CD4-positive, alpha-beta memory T cell (primary cell): ENCODE measurements at regions of chr5 and their contacts with region 1.

Region 1: DNA sequence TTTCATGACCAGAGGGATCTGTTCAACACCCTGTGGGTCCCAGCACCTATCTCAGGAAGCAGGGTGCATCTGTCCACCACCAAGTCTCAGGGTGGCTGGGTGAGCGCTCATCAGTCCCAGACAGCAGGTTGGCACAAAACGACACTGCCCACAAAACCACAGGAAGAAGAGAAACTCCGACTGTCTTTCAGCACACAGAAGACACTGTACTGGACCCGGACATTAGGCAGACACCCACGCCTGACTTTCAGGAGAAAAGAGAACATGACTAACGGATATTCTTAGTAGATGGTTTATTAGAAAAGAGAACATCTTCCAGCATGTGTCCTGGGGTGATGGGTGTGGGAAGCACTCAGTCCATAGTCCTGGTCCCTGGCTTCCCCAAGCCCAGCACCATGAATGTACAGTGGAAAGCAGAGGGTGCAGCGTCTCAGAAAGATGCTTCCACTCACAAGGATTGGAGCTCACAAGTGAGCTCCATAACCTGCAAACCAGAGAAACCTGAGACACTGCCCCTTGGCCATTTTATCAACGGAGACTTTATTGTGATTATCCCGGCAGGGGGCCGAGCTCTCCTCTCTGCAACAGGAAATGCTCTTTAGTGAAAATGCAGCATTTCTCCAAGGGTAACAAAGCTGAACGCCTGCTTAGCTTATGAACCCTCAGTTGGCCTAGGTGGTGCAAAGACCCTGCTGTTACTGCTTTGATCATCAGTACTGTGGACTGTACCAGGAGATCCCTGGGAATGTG is 35.8 kb upstream of the LCP2 start:
- DNase-seq: peak; percentile 55 to 88 (median 61)
- H3K4me3 ChIP-seq: peak overlapping the region in 1 of 2 donors; percentile 39
- H3K4me3 Mint-ChIP-seq: peak overlapping the region in 6 of 8 donors; percentile 71 to 90 (median 84)
- H3K27ac ChIP-seq: peak overlapping the region; percentile 94
- H3K27ac Mint-ChIP-seq: no peak overlapping the region
- H3K4me1 ChIP-seq: peaks cover 99% of the 10 kb centered on the region
- H3K4me1 Mint-ChIP-seq: peaks cover 0 to 59% (median 30%) of the 10 kb centered on the region in 4 donors
- H3K27me3 ChIP-seq: no peaks in the 10 kb centered on the region
- H3K27me3 Mint-ChIP-seq: peaks cover 0 to 2% of the 10 kb centered on the region in 2 donors

Region 2: GRCh38 chr5:170190436-170191134 is 142.8 kb before region 1 on chr5:
- CTCF ChIA-PET with region 1: no interaction called
- POLR2A ChIA-PET with region 1: no interaction called
- intact Hi-C with region 1: no loop called
- DNase-seq: no peak
- H3K4me3 ChIP-seq: no peak overlapping the region
- H3K4me3 Mint-ChIP-seq: no peak overlapping the region
- H3K27ac ChIP-seq: no peak overlapping the region
- H3K27ac Mint-ChIP-seq: no peak overlapping the region
- H3K4me1 ChIP-seq: no peaks in the 10 kb centered on the region
- H3K4me1 Mint-ChIP-seq: no peaks in the 10 kb centered on the region
- H3K27me3 ChIP-seq: no peaks in the 10 kb centered on the region
- H3K27me3 Mint-ChIP-seq: peaks cover 4 to 5% of the 10 kb centered on the region in 2 donors

Region 3: GRCh38 chr5:170253844-170254455 is 79.4 kb before region 1 on chr5:
- CTCF ChIA-PET with region 1: interaction called, 61 read pairs
- POLR2A ChIA-PET with region 1: interaction called, 7 read pairs
- intact Hi-C with region 1: loop called (anchors 1 kb)
- DNase-seq: peak; percentile 72 to 93 (median 79)
- H3K4me3 ChIP-seq: no peak overlapping the region
- H3K4me3 Mint-ChIP-seq: peak overlapping the region in 7 of 8 donors; percentile 2 to 78 (median 11)
- H3K27ac ChIP-seq: peak overlapping the region; percentile 60
- H3K27ac Mint-ChIP-seq: peak overlapping the region; percentile 82 to 97 (median 92)
- H3K4me1 ChIP-seq: peaks cover 51% of the 10 kb centered on the region
- H3K4me1 Mint-ChIP-seq: peaks cover 27 to 59% (median 42%) of the 10 kb centered on the region in 4 donors
- H3K27me3 ChIP-seq: no peaks in the 10 kb centered on the region
- H3K27me3 Mint-ChIP-seq: no peaks in the 10 kb centered on the region

Region 4: DNA sequence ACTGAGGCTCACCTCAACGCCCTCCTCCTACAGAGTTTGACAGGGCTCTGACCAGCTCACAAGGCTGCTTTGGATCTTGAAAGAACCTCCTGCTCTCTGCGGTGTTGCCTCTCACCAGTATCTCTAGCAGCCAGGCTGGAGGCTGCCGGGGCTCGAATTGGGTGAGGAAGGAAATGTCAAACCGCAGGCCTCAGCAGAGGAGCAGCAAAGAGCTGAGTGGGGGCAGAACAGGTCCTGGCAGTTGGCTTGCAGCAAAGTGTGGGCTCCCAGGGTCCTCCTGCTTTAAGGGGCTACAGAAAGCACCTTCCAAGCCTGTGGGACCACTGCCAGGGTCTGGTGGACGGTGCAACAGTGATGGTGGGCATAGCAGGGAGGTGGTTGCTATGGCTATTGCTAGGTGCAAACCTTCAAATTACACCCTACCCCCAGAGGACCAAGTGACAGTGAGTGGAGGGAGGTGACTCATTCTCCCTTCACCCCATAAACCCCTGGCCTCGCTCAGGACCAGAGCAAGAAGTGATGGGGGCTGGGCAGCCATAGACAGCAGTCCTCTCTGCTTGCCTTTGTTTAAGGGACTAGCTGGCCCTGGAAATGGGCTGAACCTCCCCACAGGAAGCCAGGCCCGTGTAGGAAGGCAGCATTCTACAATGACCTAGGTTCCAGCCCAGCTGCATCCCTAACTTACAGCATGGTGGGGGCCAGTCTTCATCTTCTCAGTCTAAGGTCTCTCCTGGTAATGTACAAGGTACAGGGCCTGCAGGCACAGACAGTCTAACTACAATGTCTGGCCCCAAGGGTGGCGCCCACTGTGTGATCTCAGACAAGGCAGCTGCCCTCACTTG is 54.5 kb before region 1 on chr5:
- CTCF ChIA-PET with region 1: interaction called, 195 read pairs
- POLR2A ChIA-PET with region 1: interaction called, 664 read pairs
- intact Hi-C with region 1: loop called (anchors 1 kb)
- DNase-seq: peak; percentile 90 to 96 (median 91)
- H3K4me3 ChIP-seq: peak overlapping the region in 1 of 2 donors; percentile 15
- H3K4me3 Mint-ChIP-seq: peak overlapping the region; percentile 75 to 92 (median 85)
- H3K27ac ChIP-seq: peak overlapping the region; percentile 68
- H3K27ac Mint-ChIP-seq: peak overlapping the region; percentile 91 to 100 (median 96)
- H3K4me1 ChIP-seq: peaks cover 95% of the 10 kb centered on the region
- H3K4me1 Mint-ChIP-seq: peaks cover 83 to 100% (median 93%) of the 10 kb centered on the region in 4 donors
- H3K27me3 ChIP-seq: no peaks in the 10 kb centered on the region
- H3K27me3 Mint-ChIP-seq: no peaks in the 10 kb centered on the region

Region 5: GRCh38 chr5:170293273-170293672 is 40.1 kb before region 1 on chr5:
- CTCF ChIA-PET with region 1: interaction called, 258 read pairs
- POLR2A ChIA-PET with region 1: interaction called, 664 read pairs
- intact Hi-C with region 1: loop called (anchors 1 kb)
- DNase-seq: peak in 4 of 5 donors; percentile 47 to 77 (median 50)
- H3K4me3 ChIP-seq: peak overlapping the region; percentile 33 to 97
- H3K4me3 Mint-ChIP-seq: peak overlapping the region; percentile 95 to 99 (median 98)
- H3K27ac ChIP-seq: peak overlapping the region; percentile 90
- H3K27ac Mint-ChIP-seq: peak overlapping the region; percentile 87 to 100 (median 96)
- H3K4me1 ChIP-seq: peaks cover 76% of the 10 kb centered on the region
- H3K4me1 Mint-ChIP-seq: peaks cover 59 to 100% (median 67%) of the 10 kb centered on the region in 4 donors
- H3K27me3 ChIP-seq: no peaks in the 10 kb centered on the region
- H3K27me3 Mint-ChIP-seq: no peaks in the 10 kb centered on the region

Region 6: GRCh38 chr5:170312666-170313065 is 20.7 kb before region 1 on chr5:
- CTCF ChIA-PET with region 1: interaction called, 18 read pairs
- POLR2A ChIA-PET with region 1: interaction called, 664 read pairs
- intact Hi-C with region 1: loop called (anchors 1 kb)
- DNase-seq: peak in 2 of 5 donors; percentile 39 to 93
- H3K4me3 ChIP-seq: peak overlapping the region; percentile 3 to 42
- H3K4me3 Mint-ChIP-seq: peak overlapping the region; percentile 63 to 91 (median 76)
- H3K27ac ChIP-seq: peak overlapping the region; percentile 59
- H3K27ac Mint-ChIP-seq: peak overlapping the region; percentile 84 to 97 (median 96)
- H3K4me1 ChIP-seq: peaks cover 48% of the 10 kb centered on the region
- H3K4me1 Mint-ChIP-seq: peaks cover 41 to 69% (median 49%) of the 10 kb centered on the region in 4 donors
- H3K27me3 ChIP-seq: no peaks in the 10 kb centered on the region
- H3K27me3 Mint-ChIP-seq: no peaks in the 10 kb centered on the region